Cardiac septum (tissue), 1 donor: ENCODE measurements at regions of chrX and their contacts with region 1.

Region 1: GRCh38 chrX:24395775-24396174 is 35.3 kb downstream of the SUPT20HL1 start:
- DNase-seq: no peak

Region 2: GRCh38 chrX:23871905-23872546 is 523.7 kb before region 1 on chrX:
- intact Hi-C with region 1: no loop called
- DNase-seq: no peak

Region 3: GRCh38 chrX:24464836-24465531 is 69.2 kb after region 1 on chrX and contains the start of gene PDK3:
- intact Hi-C with region 1: loop called (anchors 2 kb)
- DNase-seq: peak; percentile 90
- total RNA-seq, gene PDK3: 16.4 TPM

Region 4: DNA sequence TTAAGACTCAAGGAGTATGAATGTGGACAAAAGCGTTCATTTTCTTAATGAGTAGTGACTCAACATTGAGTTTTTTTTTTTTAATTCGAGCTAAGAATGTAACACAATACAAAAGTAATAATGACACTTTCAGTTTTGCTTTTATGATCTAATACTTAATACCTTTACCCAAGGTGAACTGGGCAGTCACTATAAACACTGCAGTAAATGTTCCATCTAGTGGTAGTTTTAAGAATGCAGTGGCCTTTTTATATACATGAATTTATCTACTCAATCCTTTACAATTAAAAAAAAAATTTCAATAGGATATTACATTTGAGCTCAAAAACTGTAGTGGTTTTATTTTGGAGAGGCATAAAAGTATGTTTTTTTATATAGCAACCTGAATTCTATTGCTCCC is 103.2 kb after region 1 on chrX:
- intact Hi-C with region 1: loop called (anchors 2 kb)
- DNase-seq: no peak